ENCODE measurements at regions of chr6 and their contacts with region 1.

Region 1: GRCh38 chr6:29016559-29017427 is 11.7 kb upstream of the ZNF311 start:
- DNase-seq: peak; percentile 58 to 81 (median 76)
- ATAC-seq: peak; percentile 88
- H3K4me3 ChIP-seq: peak overlapping the region; percentile 87
- H3K4me3 Mint-ChIP-seq: peak overlapping the region; percentile 83 to 94 (median 92)
- H3K27ac ChIP-seq: peak overlapping the region; percentile 40
- H3K27ac Mint-ChIP-seq: peak overlapping the region; percentile 44 to 87 (median 82)
- H3K4me1 ChIP-seq: peaks cover 3 to 5% of the 10 kb centered on the region in 2 donors
- H3K4me1 Mint-ChIP-seq: peaks cover 13 to 22% (median 19%) of the 10 kb centered on the region in 7 donors
- H3K27me3 ChIP-seq: no peaks in the 10 kb centered on the region
- H3K27me3 Mint-ChIP-seq: peaks cover 4 to 33% (median 17%) of the 10 kb centered on the region in 5 donors

Region 2: DNA sequence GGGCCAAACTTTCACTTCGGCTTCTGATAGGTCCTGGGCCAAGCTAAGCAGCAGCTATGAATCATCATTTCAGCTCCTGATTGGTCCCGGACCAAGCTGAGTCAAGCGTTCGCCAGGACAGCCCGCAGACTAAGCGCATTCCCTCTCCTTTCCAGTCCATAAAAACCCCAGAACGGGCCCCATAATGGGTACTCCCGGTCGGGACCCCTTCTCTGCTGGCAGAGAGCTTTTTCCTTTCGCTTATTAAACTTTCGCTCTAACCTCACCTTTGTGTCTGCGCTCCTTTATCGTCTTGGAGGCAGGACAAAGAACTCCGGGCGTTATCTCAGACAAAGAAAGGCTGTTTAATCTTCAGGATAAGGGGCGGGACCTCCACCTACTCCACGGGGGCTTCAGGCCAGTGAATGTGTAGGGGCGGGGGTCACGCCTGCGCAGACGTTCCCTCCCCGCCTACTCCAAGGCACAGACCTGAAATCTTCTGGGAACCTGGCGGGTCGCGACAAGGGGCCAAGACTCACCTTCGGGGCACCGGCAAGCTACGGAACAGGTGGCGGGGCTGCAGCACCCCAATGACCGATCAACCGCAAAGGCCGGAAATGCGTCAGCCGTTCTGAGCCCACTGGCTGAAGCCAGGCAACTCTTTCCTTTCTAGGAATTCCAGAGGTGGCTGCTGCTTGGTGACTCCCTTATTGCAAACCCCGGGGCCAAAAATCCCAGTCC is 681.1 kb before region 1 on chr6 and contains the start of gene ZSCAN31:
- CTCF ChIA-PET with region 1: no interaction called
- POLR2A ChIA-PET with region 1: no interaction called
- intact Hi-C with region 1: loop called in 1 of 2 experiments (anchors 10 kb)
- DNase-seq: peak; percentile 43 to 87 (median 76)
- ATAC-seq: peak; percentile 95
- H3K4me3 ChIP-seq: peak within 1 kb of the TSS; percentile 97
- H3K4me3 Mint-ChIP-seq: peak within 1 kb of the TSS in 1 of 10 donors; percentile 58
- H3K27ac ChIP-seq: peak within 1 kb of the TSS; percentile 92
- H3K27ac Mint-ChIP-seq: peak within 1 kb of the TSS in 1 of 9 donors; percentile 47
- H3K4me1 ChIP-seq: peaks cover 9 to 10% of the 10 kb centered on the region in 2 donors
- H3K4me1 Mint-ChIP-seq: peaks cover 0 to 16% (median 9%) of the 10 kb centered on the region in 7 donors
- H3K27me3 ChIP-seq: no peaks in the 10 kb centered on the region
- H3K27me3 Mint-ChIP-seq: peaks cover 0 to 3% (median 0%) of the 10 kb centered on the region in 5 donors
- total RNA-seq, gene ZSCAN31: 0.93 to 2.4 (median 1.2) TPM

Region 3: GRCh38 chr6:28683944-28684538 is 332.8 kb before region 1 on chr6:
- CTCF ChIA-PET with region 1: interaction called, 9 read pairs
- POLR2A ChIA-PET with region 1: no interaction called
- intact Hi-C with region 1: loop called in 1 of 2 experiments (anchors 1 kb)
- DNase-seq: peak in 7 of 9 donors; percentile 17 to 50 (median 40)
- ATAC-seq: peak; percentile 80
- H3K4me3 ChIP-seq: no peak overlapping the region
- H3K4me3 Mint-ChIP-seq: no peak overlapping the region
- H3K27ac ChIP-seq: no peak overlapping the region
- H3K27ac Mint-ChIP-seq: no peak overlapping the region
- H3K4me1 ChIP-seq: no peaks in the 10 kb centered on the region
- H3K4me1 Mint-ChIP-seq: peaks cover 0 to 17% (median 0%) of the 10 kb centered on the region in 7 donors
- H3K27me3 ChIP-seq: no peaks in the 10 kb centered on the region
- H3K27me3 Mint-ChIP-seq: peaks cover 66 to 89% (median 80%) of the 10 kb centered on the region in 5 donors

Region 4: DNA sequence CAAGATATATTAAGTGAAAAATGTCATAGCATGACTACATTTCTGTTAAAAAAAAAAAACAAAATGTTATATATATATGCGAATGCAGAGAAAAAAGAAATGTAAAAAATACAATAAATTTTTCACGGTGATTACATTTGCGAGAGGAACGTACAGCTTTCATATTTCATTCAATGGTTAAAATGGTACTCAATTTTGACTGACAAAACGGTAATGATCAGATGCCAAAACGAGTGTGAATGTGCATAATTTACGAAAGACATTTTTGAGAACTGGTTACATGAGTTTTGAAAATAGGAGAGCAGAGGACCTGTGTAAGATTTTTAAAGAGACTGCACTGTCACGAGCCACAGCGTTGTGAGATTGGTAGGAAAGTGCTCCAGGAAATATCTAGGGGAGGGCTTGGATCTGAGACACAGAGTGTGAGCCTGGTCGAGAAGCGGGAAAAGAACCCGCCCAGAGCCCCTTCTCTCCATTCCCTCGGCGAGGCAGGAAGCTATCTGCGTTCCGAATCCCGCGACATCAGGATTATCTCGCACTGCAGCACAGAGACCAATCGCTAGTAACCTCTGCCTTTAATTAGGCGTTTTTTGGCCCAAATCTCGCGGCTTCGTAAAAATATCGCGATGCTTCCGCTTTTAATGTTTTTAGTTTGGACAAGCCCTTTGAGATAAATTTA is 121.5 kb before region 1 on chr6:
- CTCF ChIA-PET with region 1: no interaction called
- POLR2A ChIA-PET with region 1: interaction called, 6 read pairs
- intact Hi-C with region 1: loop called (anchors 1 kb)
- DNase-seq: peak; percentile 72 to 95 (median 91)
- ATAC-seq: peak; percentile 83
- H3K4me3 ChIP-seq: peak overlapping the region; percentile 82
- H3K4me3 Mint-ChIP-seq: peak overlapping the region; percentile 92 to 100 (median 98)
- H3K27ac ChIP-seq: peak overlapping the region; percentile 99
- H3K27ac Mint-ChIP-seq: peak overlapping the region; percentile 98 to 100 (median 100)
- H3K4me1 ChIP-seq: peaks cover 5 to 6% of the 10 kb centered on the region in 2 donors
- H3K4me1 Mint-ChIP-seq: peaks cover 0 to 32% (median 14%) of the 10 kb centered on the region in 7 donors
- H3K27me3 ChIP-seq: no peaks in the 10 kb centered on the region
- H3K27me3 Mint-ChIP-seq: peaks cover 0 to 15% (median 0%) of the 10 kb centered on the region in 5 donors

Region 5: DNA sequence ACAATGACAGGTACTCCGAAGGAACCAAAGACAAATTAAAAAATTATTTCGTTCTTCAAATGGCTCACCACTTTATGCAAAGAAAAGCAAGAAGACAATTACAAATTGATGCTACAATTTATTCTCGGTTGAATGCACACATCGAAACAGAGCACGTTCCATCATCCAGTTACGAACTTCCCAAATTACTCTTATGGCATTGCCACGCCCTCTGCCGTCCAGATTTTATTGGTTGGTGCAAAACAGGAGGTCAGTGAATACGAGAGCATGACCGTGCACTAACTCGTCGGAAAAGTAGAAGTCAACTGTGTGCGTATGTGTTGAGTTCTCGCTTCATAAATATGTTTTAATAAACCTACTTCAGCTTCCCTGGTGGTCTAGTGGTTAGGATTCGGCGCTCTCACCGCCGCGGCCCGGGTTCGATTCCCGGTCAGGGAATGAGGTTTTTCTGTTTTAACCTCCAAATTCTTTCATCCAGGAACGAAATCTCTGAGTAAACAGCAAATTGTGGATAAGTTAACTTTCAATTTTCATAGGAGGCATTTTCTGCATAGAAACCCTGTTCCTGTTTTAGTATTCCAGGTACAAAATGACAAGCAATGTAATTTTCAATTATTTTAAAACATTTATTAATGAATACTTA is 34.8 kb before region 1 on chr6:
- CTCF ChIA-PET with region 1: interaction called, 5 read pairs
- POLR2A ChIA-PET with region 1: interaction called, 6 read pairs
- intact Hi-C with region 1: loop called (anchors 1 kb)
- DNase-seq: peak; percentile 48 to 89 (median 86)
- ATAC-seq: peak; percentile 81
- H3K4me3 ChIP-seq: peak overlapping the region; percentile 99
- H3K4me3 Mint-ChIP-seq: peak overlapping the region; percentile 85 to 100 (median 92)
- H3K27ac ChIP-seq: peak overlapping the region; percentile 47
- H3K27ac Mint-ChIP-seq: peak overlapping the region; percentile 87 to 100 (median 99)
- H3K4me1 ChIP-seq: peaks cover 7 to 18% of the 10 kb centered on the region in 2 donors
- H3K4me1 Mint-ChIP-seq: peaks cover 30 to 80% (median 66%) of the 10 kb centered on the region in 7 donors
- H3K27me3 ChIP-seq: no peaks in the 10 kb centered on the region
- H3K27me3 Mint-ChIP-seq: peaks cover 14 to 61% (median 36%) of the 10 kb centered on the region in 5 donors

Region 6: GRCh38 chr6:29005183-29005885 is 11.5 kb before region 1 on chr6 and contains the start of gene ZNF311:
- CTCF ChIA-PET with region 1: interaction called, 6 read pairs
- POLR2A ChIA-PET with region 1: interaction called, 3 read pairs
- intact Hi-C with region 1: loop called in 1 of 2 experiments (anchors 1 kb)
- DNase-seq: peak in 6 of 9 donors; percentile 18 to 56 (median 38)
- ATAC-seq: peak; percentile 85
- H3K4me3 ChIP-seq: peak within 1 kb of the TSS; percentile 51
- H3K4me3 Mint-ChIP-seq: peak within 1 kb of the TSS; percentile 87 to 100 (median 95)
- H3K27ac ChIP-seq: peak within 1 kb of the TSS; percentile 66
- H3K27ac Mint-ChIP-seq: peak within 1 kb of the TSS; percentile 60 to 94 (median 86)
- H3K4me1 ChIP-seq: peaks cover 4 to 7% of the 10 kb centered on the region in 2 donors
- H3K4me1 Mint-ChIP-seq: peaks cover 16 to 27% (median 21%) of the 10 kb centered on the region in 7 donors
- H3K27me3 ChIP-seq: peaks cover 0 to 7% of the 10 kb centered on the region in 2 donors
- H3K27me3 Mint-ChIP-seq: peaks cover 0 to 17% (median 3%) of the 10 kb centered on the region in 5 donors
- total RNA-seq, gene ZNF311: 0.22 to 0.73 (median 0.57) TPM

Measured in naive thymus-derived CD4-positive, alpha-beta T cell (primary cell).